Sigmoid colon (tissue), 7 donors: ENCODE measurements at regions of chr6 and their contacts with region 1.

Region 1: DNA sequence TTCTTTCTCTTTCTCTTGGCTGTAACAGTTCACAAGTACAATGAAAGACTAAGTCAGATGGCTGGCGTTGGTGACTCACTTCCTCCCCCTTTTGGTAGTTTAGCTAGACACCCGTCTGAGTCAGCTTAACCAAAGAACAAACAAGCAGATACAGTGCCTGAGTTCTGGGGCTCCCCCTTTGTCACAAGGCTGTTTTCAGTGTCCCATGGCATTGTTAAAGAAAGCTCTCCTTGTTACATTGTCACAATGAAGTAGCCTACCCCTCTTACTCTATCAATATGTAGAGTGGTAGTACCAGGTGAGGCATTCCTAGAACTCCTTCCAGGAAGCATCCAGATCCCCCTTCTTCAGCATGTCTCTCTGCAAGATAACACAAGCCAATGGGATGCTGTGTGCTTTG is 38.6 kb downstream of the KIAA0408 start:
- DNase-seq: peak; percentile 85
- H3K4me3 ChIP-seq: no peak overlapping the region
- H3K27ac ChIP-seq: peak overlapping the region; percentile 4 to 71 (median 64)
- H3K4me1 ChIP-seq: peaks cover 0 to 30% (median 18%) of the 10 kb centered on the region in 4 donors
- H3K27me3 ChIP-seq: no peaks in the 10 kb centered on the region
- CTCF ChIP-seq: peak; percentile 8 to 49 (median 30)
- EP300 ChIP-seq: no peak
- POLR2A ChIP-seq: no peak

Region 2: GRCh38 chr6:127302728-127303660 is 117.6 kb before region 1 on chr6:
- intact Hi-C with region 1: loop called (anchors 2 kb)
- DNase-seq: no peak
- H3K4me3 ChIP-seq: no peak overlapping the region
- H3K27ac ChIP-seq: no peak overlapping the region
- H3K4me1 ChIP-seq: peaks cover 0 to 50% (median 42%) of the 10 kb centered on the region in 4 donors
- H3K27me3 ChIP-seq: no peaks in the 10 kb centered on the region
- CTCF ChIP-seq: peak; percentile 62 to 70 (median 66)
- EP300 ChIP-seq: no peak
- POLR2A ChIP-seq: no peak

Region 3: GRCh38 chr6:127342946-127343808 is 77.4 kb before region 1 on chr6 and contains the start of gene ECHDC1:
- intact Hi-C with region 1: loop called (anchors 2 kb)
- DNase-seq: peak; percentile 79
- H3K4me3 ChIP-seq: peak within 1 kb of the TSS; percentile 63 to 83 (median 76)
- H3K27ac ChIP-seq: peak within 1 kb of the TSS; percentile 83 to 91 (median 87)
- H3K4me1 ChIP-seq: peaks cover 0 to 48% (median 44%) of the 10 kb centered on the region in 4 donors
- H3K27me3 ChIP-seq: no peaks in the 10 kb centered on the region
- CTCF ChIP-seq: no peak
- EP300 ChIP-seq: no peak
- POLR2A ChIP-seq: no peak
- total RNA-seq, gene ECHDC1: 77.3 to 97.1 (median 83.5) TPM

Region 4: GRCh38 chr6:127459231-127459641 is 38.7 kb after region 1 on chr6 and contains the start of gene KIAA0408:
- intact Hi-C with region 1: loop called (anchors 2 kb)
- DNase-seq: peak; percentile 95
- H3K4me3 ChIP-seq: peak within 1 kb of the TSS; percentile 51 to 58 (median 56)
- H3K27ac ChIP-seq: peak within 1 kb of the TSS; percentile 83 to 91 (median 86)
- H3K4me1 ChIP-seq: peaks cover 0 to 74% (median 45%) of the 10 kb centered on the region in 4 donors
- H3K27me3 ChIP-seq: no peaks in the 10 kb centered on the region
- CTCF ChIP-seq: no peak
- EP300 ChIP-seq: peak; percentile 18 to 83 (median 73)
- POLR2A ChIP-seq: no peak
- total RNA-seq, gene KIAA0408: 27.3 to 103 (median 58.5) TPM